ENCODE measurements at regions of chr7 and their contacts with region 1.

Region 1: DNA sequence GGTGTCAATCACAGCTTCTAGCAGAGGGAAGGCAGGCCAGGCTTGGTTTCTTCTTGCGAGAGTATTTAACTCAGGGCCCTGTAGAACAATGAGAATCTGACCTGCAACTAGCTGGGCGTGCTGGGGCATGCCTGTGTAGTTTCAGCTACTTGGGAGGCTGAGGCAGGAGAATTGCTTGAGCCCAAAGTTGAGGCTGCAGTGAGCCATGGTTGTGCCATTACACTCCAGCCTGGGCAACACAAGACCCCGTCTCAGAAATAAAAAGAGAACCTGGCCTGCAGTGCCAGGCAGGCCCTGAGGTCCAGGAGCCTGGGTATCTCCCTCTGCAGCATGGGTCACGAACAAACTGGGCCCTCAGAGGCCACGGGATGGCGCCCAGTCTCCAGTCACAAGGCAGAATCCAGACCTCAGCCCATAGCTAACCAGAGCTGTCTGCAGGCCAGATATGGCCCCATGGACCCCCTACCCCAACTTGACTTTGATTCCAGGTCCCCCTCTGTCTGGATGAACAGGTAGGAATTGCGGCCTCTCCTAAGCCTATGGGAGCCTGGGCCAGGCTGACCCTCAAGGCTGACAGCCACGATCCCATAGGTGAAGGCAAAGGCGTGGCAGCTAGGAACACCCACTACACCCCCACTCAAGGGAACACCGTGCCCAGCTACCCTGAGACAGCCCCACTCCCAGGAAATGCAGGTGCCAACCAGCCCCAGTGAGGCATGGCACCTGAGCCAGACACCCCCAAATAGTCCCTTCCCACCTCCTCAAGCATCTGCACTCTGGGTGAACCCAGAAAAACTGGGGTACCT is 102.7 kb upstream of the TNRC18 start:
- DNase-seq: peak in 1 of 2 experiments; percentile 46
- H3K4me3 ChIP-seq: no peak overlapping the region
- H3K27ac ChIP-seq: peak overlapping the region; percentile 95
- H3K4me1 ChIP-seq: peaks cover 23% of the 10 kb centered on the region
- H3K27me3 ChIP-seq: no peaks in the 10 kb centered on the region
- CTCF ChIP-seq: peak; percentile 18; the same call in 1 of the 2 replicates

Region 2: DNA sequence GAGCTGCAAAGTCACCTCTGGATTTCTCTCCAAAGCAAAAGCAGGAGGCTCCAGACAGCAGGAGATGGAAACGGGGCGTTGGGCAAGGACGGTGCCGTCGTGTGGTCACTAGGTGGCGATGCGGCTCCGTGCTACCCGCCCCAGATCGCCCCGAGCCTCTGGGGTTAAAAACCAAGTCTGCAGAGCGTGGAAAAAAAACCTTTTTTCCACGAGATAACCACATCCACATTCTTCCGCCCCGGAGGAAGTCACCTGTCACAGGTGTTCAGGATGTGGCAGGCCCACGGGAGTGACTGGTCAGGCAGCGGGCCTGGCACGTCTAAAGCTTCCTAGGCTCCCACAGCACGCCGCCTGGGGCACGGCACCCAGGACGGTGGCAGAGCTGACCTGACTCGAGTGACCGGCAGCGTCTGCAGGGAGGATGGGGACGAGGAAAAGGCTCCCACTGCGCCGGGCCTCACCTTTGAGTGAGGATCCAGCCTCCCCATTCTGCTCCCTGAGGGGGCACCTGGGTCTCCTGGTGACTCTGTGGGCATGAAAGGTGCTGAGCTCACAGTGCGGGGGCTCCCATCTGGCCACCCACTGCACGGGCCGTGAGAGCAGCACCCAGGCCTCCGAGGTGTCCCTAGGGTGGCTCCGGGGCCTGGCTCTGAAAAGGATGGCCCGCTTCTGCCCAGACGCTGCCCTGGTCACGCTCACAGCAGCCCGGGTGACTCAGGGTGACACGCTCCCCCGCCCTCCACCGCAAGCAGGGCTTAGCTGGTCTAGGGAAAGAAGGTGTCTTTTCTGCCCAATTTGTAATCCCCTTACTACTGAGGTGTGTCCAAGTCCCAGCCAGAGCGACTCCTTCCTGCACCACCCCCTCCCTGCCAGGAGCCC is 31.4 kb before region 1 on chr7:
- CTCF ChIA-PET with region 1: no interaction called
- POLR2A ChIA-PET with region 1: no interaction called
- intact Hi-C with region 1: loop called (anchors 1 kb)
- DNase-seq: peak; percentile 84 to 95
- H3K4me3 ChIP-seq: peak overlapping the region; percentile 22; the same call in 1 of the 2 replicates
- H3K27ac ChIP-seq: peak overlapping the region; percentile 63
- H3K4me1 ChIP-seq: peaks cover 19% of the 10 kb centered on the region
- H3K27me3 ChIP-seq: no peaks in the 10 kb centered on the region
- CTCF ChIP-seq: peak; percentile 98

Region 3: DNA sequence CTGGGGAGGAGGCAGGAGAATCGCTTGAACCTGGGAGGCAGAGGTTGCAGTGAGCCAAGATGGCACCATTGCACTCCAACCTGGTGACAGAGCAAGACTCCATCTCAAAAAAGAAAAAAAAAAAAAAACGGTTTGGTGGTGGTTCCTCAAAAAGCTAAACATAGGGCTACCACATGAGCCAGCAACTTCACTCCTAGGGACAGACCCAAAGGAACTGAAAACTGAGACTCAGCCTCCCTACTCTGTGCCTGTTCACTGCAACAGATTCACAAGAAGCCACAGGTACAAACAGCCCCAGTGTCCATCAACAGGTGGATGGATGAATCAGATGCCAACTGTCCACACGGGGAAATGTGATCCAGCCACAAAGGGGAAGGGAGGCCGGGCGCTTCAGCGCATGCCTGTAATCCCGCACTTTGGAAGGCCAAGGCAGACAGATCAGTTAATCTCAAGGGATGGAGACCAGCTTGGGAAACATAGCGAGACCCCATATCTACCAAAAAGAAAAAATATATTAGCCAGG is 23.5 kb before region 1 on chr7:
- CTCF ChIA-PET with region 1: no interaction called
- POLR2A ChIA-PET with region 1: interaction called, 12 read pairs
- intact Hi-C with region 1: no loop called
- DNase-seq: no peak
- H3K4me3 ChIP-seq: no peak overlapping the region
- H3K27ac ChIP-seq: no peak overlapping the region
- H3K4me1 ChIP-seq: no peaks in the 10 kb centered on the region
- H3K27me3 ChIP-seq: no peaks in the 10 kb centered on the region
- CTCF ChIP-seq: no peak

Region 4: DNA sequence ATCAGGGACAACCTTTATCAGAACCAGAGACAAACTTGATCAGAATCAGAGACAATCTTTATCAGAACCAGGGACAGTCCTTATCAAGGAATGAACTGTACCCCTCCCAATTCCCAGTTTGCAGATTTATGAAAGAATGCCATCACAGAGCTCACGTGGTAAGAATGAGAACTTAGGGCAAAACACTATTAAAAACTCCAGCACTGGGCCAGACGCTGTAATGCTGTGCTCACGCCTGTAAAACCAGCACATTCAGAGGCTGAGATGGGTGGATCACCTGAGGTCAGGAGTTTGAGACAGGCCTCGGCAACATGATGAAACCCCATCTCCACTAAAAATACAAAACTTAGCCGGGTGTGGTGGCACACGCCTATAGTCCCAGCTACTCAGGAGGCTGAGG is 17.6 kb before region 1 on chr7:
- CTCF ChIA-PET with region 1: interaction called, 12 read pairs
- POLR2A ChIA-PET with region 1: interaction called, 15 read pairs
- intact Hi-C with region 1: loop called (anchors 2 kb)
- DNase-seq: no peak
- H3K4me3 ChIP-seq: no peak overlapping the region
- H3K27ac ChIP-seq: peak overlapping the region; percentile 46; the same call in 1 of the 2 replicates
- H3K4me1 ChIP-seq: peaks cover 34% of the 10 kb centered on the region
- H3K27me3 ChIP-seq: no peaks in the 10 kb centered on the region
- CTCF ChIP-seq: no peak

Region 5: GRCh38 chr7:5514440-5515035 is 11.8 kb before region 1 on chr7:
- CTCF ChIA-PET with region 1: interaction called, 12 read pairs
- POLR2A ChIA-PET with region 1: interaction called, 15 read pairs
- intact Hi-C with region 1: loop called (anchors 2 kb)
- DNase-seq: peak; percentile 29 to 81
- H3K4me3 ChIP-seq: peak overlapping the region; percentile 90
- H3K27ac ChIP-seq: peak overlapping the region; percentile 97
- H3K4me1 ChIP-seq: peaks cover 36% of the 10 kb centered on the region
- H3K27me3 ChIP-seq: no peaks in the 10 kb centered on the region
- CTCF ChIP-seq: no peak; the same call in 1 of the 2 replicates

Measured in PC-9 (cell line).